ENCODE measurements at regions of chr6 and their contacts with region 1.

Region 1: GRCh38 chr6:55239099-55239498 is 64.8 kb downstream of the HCRTR2 start:
- DNase-seq: no peak

Region 2: GRCh38 chr6:53979468-53980067 is 1259.5 kb before region 1 on chr6:
- intact Hi-C with region 1: loop called in 1 of 2 experiments (anchors 5 kb)
- DNase-seq: no peak

Measured in posterior vena cava (tissue), 2 donors.